Tibial artery (tissue), 4 donors: ENCODE measurements at regions of chr13 and their contacts with region 1.

Region 1: GRCh38 chr13:60811581-60811980 is 414.6 kb downstream of the TDRD3 start:
- DNase-seq: no peak
- H3K4me3 ChIP-seq: no peak overlapping the region
- H3K27ac ChIP-seq: no peak overlapping the region
- H3K4me1 ChIP-seq: peaks cover 0 to 43% (median 4%) of the 10 kb centered on the region in 4 donors
- H3K27me3 ChIP-seq: no peaks in the 10 kb centered on the region
- CTCF ChIP-seq: no peak

Region 2: GRCh38 chr13:62684359-62684758 is 1872.8 kb after region 1 on chr13:
- intact Hi-C with region 1: loop called (anchors 5 kb)
- DNase-seq: no peak
- H3K4me3 ChIP-seq: no peak overlapping the region
- H3K27ac ChIP-seq: no peak overlapping the region
- H3K4me1 ChIP-seq: no peaks in the 10 kb centered on the region
- H3K27me3 ChIP-seq: no peaks in the 10 kb centered on the region
- CTCF ChIP-seq: no peak